Head of caudate nucleus (tissue), 42 donors: ENCODE measurements at regions of chr14 and their contacts with region 1.

Region 1: GRCh38 chr14:72893636-72894321 is at the start of gene DPF3:
- DNase-seq: peak; percentile 93 to 99 (median 97)

Region 2: GRCh38 chr14:72682184-72682583 is 211.6 kb before region 1 on chr14:
- intact Hi-C with region 1: no loop called
- DNase-seq: no peak

Region 3: GRCh38 chr14:72714094-72714493 is 179.7 kb before region 1 on chr14:
- intact Hi-C with region 1: loop called (anchors 10 kb)
- DNase-seq: no peak

Region 4: DNA sequence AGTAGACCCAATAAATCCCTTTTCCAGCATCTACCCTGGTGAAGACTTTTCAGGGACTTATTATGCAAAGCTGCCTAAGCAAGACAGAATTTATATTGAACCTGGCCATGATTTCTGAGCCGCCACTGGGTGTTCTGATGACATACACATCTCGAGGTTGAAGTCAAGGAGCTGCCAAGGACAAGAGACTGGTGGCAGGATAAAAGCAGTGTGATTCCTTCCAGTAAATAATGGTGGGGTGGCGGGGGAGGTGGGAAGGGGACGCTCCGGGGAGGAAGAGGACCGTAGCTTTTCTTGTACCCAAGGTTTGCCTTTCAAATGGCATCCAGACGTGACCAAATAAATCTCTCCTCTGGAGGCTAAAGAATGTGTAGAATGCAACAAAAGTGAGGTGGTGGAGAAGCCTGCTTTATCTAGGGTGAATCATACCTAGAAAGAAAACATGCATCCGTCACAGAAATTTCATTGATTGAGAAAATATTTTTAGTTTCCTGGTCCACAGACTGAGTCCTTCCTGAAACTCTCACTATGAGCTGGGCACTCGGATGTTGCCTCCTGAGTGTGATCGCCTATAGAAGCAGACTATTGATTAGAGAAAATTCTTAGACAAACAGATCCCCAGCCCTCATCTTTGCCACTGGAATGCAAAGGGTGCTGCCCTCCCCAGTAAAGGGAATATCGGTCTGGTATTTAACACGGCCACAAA is 112.2 kb before region 1 on chr14:
- intact Hi-C with region 1: loop called (anchors 10 kb)
- DNase-seq: peak in 1 of 42 donors; percentile 32